Caco-2 (cell line): ENCODE measurements at regions of chr13 and their contacts with region 1.

Region 1: GRCh38 chr13:100721885-100722512 is 47.4 kb upstream of the TMTC4 start:
- DNase-seq: peak; percentile 67 to 75
- H3K4me3 ChIP-seq: no peak overlapping the region
- H3K4me3 Mint-ChIP-seq: no peak overlapping the region
- H3K27ac Mint-ChIP-seq: no peak overlapping the region
- H3K4me1 ChIP-seq: peaks cover 11% of the 10 kb centered on the region; the same call in 1 of the 2 replicates
- H3K4me1 Mint-ChIP-seq: peaks cover 17% of the 10 kb centered on the region
- H3K27me3 ChIP-seq: no peaks in the 10 kb centered on the region
- H3K27me3 Mint-ChIP-seq: no peaks in the 10 kb centered on the region
- CTCF ChIP-seq: peak; percentile 69 to 75

Region 2: DNA sequence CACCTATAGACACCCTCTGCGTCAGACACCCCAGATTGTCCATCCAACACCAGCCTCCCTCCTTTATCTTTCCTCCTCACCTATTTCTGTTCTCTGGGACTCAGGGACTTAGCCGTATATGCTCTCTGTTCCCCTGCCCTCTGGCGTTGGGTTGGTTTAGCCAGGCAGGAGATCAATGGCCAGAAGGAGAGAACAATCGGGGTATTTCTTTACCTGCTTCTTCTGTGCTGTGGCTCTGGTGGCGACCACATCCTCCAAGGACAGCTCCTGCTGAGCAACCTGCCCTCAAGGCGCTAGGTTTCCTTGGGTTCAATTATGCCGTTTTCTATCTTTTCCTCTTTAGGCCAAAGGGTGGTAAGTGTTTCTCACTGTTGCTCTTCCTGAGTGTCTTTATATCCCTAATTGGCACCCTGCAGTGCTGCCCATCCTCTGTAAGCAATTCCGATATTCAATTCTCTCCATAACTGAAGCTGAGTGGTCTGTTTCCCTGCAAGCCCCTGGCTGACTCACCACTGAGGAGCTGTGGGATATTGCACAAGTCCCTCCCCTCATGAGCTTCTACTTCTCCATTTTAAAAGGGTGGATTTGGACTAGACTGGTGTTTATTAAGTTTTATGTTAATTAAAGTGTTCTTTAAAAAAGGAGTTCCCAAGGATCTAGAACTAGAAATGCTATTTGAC is 16.3 kb after region 1 on chr13:
- CTCF ChIA-PET with region 1: interaction called, 12 read pairs
- POLR2A ChIA-PET with region 1: no interaction called
- intact Hi-C with region 1: loop called (anchors 1 kb)
- DNase-seq: no peak
- H3K4me3 ChIP-seq: no peak overlapping the region
- H3K4me3 Mint-ChIP-seq: no peak overlapping the region
- H3K27ac Mint-ChIP-seq: no peak overlapping the region
- H3K4me1 ChIP-seq: peaks cover 35% of the 10 kb centered on the region
- H3K4me1 Mint-ChIP-seq: peaks cover 7% of the 10 kb centered on the region
- H3K27me3 ChIP-seq: no peaks in the 10 kb centered on the region
- H3K27me3 Mint-ChIP-seq: no peaks in the 10 kb centered on the region
- CTCF ChIP-seq: no peak

Region 3: GRCh38 chr13:100883453-100883852 is 161.5 kb after region 1 on chr13:
- CTCF ChIA-PET with region 1: interaction called, 4 read pairs
- POLR2A ChIA-PET with region 1: no interaction called
- intact Hi-C with region 1: loop called (anchors 1 kb)
- DNase-seq: peak in 1 of 2 experiments; percentile 8
- H3K4me3 ChIP-seq: no peak overlapping the region
- H3K4me3 Mint-ChIP-seq: no peak overlapping the region
- H3K27ac Mint-ChIP-seq: no peak overlapping the region
- H3K4me1 ChIP-seq: no peaks in the 10 kb centered on the region
- H3K4me1 Mint-ChIP-seq: no peaks in the 10 kb centered on the region
- H3K27me3 ChIP-seq: no peaks in the 10 kb centered on the region
- H3K27me3 Mint-ChIP-seq: no peaks in the 10 kb centered on the region
- CTCF ChIP-seq: peak; percentile 19 to 44

Region 4: DNA sequence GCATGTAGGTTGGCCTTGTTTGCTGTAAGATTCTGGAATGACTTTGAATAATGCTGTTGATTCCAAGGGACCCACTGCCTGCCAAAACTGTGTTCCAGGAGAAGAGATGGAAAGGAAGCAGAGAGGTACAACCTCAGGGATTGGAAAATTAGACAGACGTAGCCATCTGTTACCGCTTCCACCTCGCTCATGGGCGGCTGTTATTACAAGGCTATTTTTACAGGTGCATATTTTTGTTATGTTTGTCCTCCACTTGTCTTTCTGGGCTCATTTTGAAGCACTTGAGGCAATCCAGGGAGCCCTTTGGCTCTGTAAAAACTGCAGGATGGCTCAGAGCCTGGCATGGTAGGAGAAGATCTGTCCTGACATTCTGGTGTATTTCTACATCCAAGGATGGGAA is 229.0 kb after region 1 on chr13:
- CTCF ChIA-PET with region 1: no interaction called
- POLR2A ChIA-PET with region 1: no interaction called
- intact Hi-C with region 1: no loop called
- DNase-seq: no peak
- H3K4me3 ChIP-seq: no peak overlapping the region
- H3K4me3 Mint-ChIP-seq: no peak overlapping the region
- H3K27ac Mint-ChIP-seq: no peak overlapping the region
- H3K4me1 ChIP-seq: no peaks in the 10 kb centered on the region
- H3K4me1 Mint-ChIP-seq: no peaks in the 10 kb centered on the region
- H3K27me3 ChIP-seq: no peaks in the 10 kb centered on the region
- H3K27me3 Mint-ChIP-seq: peaks cover 32% of the 10 kb centered on the region
- CTCF ChIP-seq: no peak

Region 5: GRCh38 chr13:101098873-101099272 is 376.9 kb after region 1 on chr13:
- CTCF ChIA-PET with region 1: no interaction called
- POLR2A ChIA-PET with region 1: no interaction called
- intact Hi-C with region 1: loop called (anchors 1 kb)
- DNase-seq: no peak
- H3K4me3 ChIP-seq: no peak overlapping the region
- H3K4me3 Mint-ChIP-seq: no peak overlapping the region
- H3K27ac Mint-ChIP-seq: no peak overlapping the region
- H3K4me1 ChIP-seq: no peaks in the 10 kb centered on the region
- H3K4me1 Mint-ChIP-seq: no peaks in the 10 kb centered on the region
- H3K27me3 ChIP-seq: no peaks in the 10 kb centered on the region
- H3K27me3 Mint-ChIP-seq: peaks cover 7% of the 10 kb centered on the region
- CTCF ChIP-seq: no peak